ENCODE measurements at regions of chr3 and their contacts with region 1.

Region 1: GRCh38 chr3:48898383-48899234 is at the start of gene SLC25A20:
- DNase-seq: peak; percentile 91 to 97 (median 95)
- ATAC-seq: peak; percentile 96 to 99 (median 98)
- H3K4me3 ChIP-seq: peak within 1 kb of the TSS; percentile 25 to 94 (median 78)
- H3K27ac ChIP-seq: peak within 1 kb of the TSS; percentile 41 to 92 (median 87)
- H3K4me1 ChIP-seq: peaks cover 0 to 29% (median 14%) of the 10 kb centered on the region in 12 donors
- H3K27me3 ChIP-seq: no peaks in the 10 kb centered on the region
- CTCF ChIP-seq: peak in 2 of 12 donors; percentile 8 to 12
- POLR2A ChIP-seq: peak in 1 of 2 donors; percentile 78
- total RNA-seq, gene SLC25A20: 44.6 to 176 (median 69.5) TPM

Region 2: DNA sequence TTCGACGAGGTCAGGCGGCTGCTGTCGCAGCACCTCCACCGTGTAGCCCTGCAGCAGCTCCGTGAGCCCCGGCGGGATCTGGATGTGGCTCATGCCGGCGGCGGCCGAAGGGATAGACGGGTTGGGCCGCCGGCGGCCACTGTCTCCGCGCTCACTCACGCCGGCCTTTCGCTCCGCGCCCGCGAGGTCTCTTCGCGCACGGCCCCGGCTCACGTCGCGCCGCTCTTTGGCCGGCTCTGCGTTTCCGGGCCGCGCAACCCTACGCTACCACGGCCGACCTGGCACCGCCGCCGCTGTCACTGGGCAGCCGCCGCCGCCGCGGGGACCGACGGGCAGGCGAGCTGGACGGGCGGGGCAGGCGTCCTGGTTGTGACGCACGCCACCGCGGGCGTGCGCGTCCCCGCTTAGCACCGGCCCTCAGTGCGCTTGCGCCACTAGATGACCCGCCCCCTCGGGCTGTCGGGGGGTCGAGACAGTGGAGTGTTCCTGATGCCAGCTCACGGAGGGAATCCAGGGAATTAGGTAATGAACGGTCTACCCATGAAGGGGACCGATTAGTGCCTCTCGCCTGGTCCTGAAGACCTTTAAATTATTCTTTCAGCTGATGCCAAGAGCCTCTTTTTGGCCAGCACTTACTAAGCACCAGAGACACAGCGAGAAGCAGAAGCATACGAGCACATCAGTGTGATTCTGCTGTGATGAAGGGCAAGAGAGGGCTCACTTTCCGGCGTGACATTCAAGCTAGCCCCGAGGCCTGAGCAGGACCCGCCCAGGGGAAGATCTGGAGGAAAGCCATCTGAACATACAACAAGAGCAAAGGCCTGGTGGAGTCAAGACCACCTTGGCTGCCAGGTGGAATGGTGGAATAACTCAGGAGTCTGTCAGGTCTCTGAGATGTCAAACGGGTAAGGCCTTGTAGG is 50.8 kb before region 1 on chr3 and contains the start of gene PRKAR2A:
- intact Hi-C with region 1: loop called in 2 of 10 experiments (anchors 2 to 5 kb)
- DNase-seq: peak; percentile 90 to 95 (median 93)
- ATAC-seq: peak; percentile 88 to 97 (median 96)
- H3K4me3 ChIP-seq: peak within 1 kb of the TSS; percentile 65 to 94 (median 84)
- H3K27ac ChIP-seq: peak within 1 kb of the TSS; percentile 91 to 99 (median 95)
- H3K4me1 ChIP-seq: peaks cover 10 to 30% (median 20%) of the 10 kb centered on the region in 12 donors
- H3K27me3 ChIP-seq: no peaks in the 10 kb centered on the region
- CTCF ChIP-seq: no peak
- POLR2A ChIP-seq: peak; percentile 20 to 90
- total RNA-seq, gene PRKAR2A: 33.2 to 71.6 (median 44.9) TPM

Region 3: GRCh38 chr3:48918388-48919214 is 20.0 kb after region 1 on chr3 and contains the start of gene ARIH2:
- intact Hi-C with region 1: loop called in 3 of 10 experiments (anchors 1 to 2 kb)
- DNase-seq: peak; percentile 94 to 97 (median 95)
- ATAC-seq: peak; percentile 97 to 98 (median 98)
- H3K4me3 ChIP-seq: peak within 1 kb of the TSS; percentile 64 to 100 (median 90)
- H3K27ac ChIP-seq: peak within 1 kb of the TSS; percentile 93 to 99 (median 97)
- H3K4me1 ChIP-seq: peaks cover 4 to 44% (median 29%) of the 10 kb centered on the region in 12 donors
- H3K27me3 ChIP-seq: no peaks in the 10 kb centered on the region
- CTCF ChIP-seq: peak in 6 of 12 donors; percentile 6 to 35 (median 20)
- POLR2A ChIP-seq: peak in 1 of 2 donors; percentile 85
- total RNA-seq, gene ARIH2: 87.7 to 223 (median 126) TPM

Region 4: DNA sequence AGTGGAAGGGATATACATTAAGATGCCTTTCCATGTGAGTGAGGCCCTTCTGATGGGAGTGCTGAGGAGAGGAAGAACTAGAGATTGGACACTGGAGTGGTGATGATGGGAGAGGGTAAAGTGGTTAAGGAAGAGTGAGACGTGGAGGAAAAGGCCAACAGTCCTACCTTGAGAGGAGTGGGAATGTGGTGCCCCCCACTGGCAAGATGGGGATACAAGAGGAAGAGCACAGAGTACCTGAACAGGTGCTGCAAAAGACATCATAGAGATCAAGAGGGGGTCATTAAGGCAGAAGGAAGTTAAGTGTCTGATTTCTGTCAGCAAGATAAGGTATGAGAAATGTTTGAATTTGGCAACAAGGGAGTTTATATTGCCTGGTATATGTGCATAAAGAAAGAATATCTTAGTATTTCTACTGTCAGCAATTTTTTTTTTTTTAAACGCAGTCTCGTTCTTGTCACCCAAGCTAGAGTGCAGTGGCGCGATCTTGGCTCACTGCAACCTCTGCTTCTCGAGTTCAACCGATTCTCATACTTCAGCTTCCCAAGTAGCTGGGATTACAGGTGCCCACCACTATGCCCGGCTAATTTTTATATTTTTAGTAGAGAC is 54.0 kb after region 1 on chr3:
- intact Hi-C with region 1: loop called in 2 of 10 experiments (anchors 10 kb)
- DNase-seq: peak in 1 of 5 donors; percentile 36
- ATAC-seq: peak in 3 of 4 donors; percentile 34 to 64 (median 37)
- H3K4me3 ChIP-seq: no peak overlapping the region
- H3K27ac ChIP-seq: no peak overlapping the region
- H3K4me1 ChIP-seq: peaks cover 0 to 34% (median 9%) of the 10 kb centered on the region in 12 donors
- H3K27me3 ChIP-seq: no peaks in the 10 kb centered on the region
- CTCF ChIP-seq: peak; percentile 21 to 63 (median 39)
- POLR2A ChIP-seq: no peak